CD8-positive, alpha-beta memory T cell (primary cell): ENCODE measurements at regions of chr1 and their contacts with region 1.

Region 1: GRCh38 chr1:203267347-203267846 is 37.9 kb upstream of the BTG2 start:
- DNase-seq: peak; percentile 68 to 88 (median 82)
- H3K4me3 ChIP-seq: peak overlapping the region; percentile 83
- H3K4me3 Mint-ChIP-seq: peak overlapping the region; percentile 82 to 93 (median 87)
- H3K27ac ChIP-seq: no peak overlapping the region
- H3K27ac Mint-ChIP-seq: peak overlapping the region; percentile 82 to 95 (median 92)
- H3K4me1 ChIP-seq: peaks cover 34% of the 10 kb centered on the region
- H3K4me1 Mint-ChIP-seq: peaks cover 11 to 22% (median 21%) of the 10 kb centered on the region in 3 donors
- H3K27me3 ChIP-seq: no peaks in the 10 kb centered on the region
- H3K27me3 Mint-ChIP-seq: peaks cover 2 to 3% of the 10 kb centered on the region in 2 donors

Region 2: GRCh38 chr1:203038891-203039608 is 228.3 kb before region 1 on chr1:
- CTCF ChIA-PET with region 1: interaction called, 21 read pairs
- POLR2A ChIA-PET with region 1: interaction called, 3 read pairs
- DNase-seq: peak; percentile 15 to 73 (median 45)
- H3K4me3 ChIP-seq: no peak overlapping the region
- H3K4me3 Mint-ChIP-seq: no peak overlapping the region
- H3K27ac ChIP-seq: no peak overlapping the region
- H3K27ac Mint-ChIP-seq: no peak overlapping the region
- H3K4me1 ChIP-seq: no peaks in the 10 kb centered on the region
- H3K4me1 Mint-ChIP-seq: peaks cover 1 to 5% (median 5%) of the 10 kb centered on the region in 3 donors
- H3K27me3 ChIP-seq: no peaks in the 10 kb centered on the region
- H3K27me3 Mint-ChIP-seq: peaks cover 4 to 12% of the 10 kb centered on the region in 2 donors

Region 3: DNA sequence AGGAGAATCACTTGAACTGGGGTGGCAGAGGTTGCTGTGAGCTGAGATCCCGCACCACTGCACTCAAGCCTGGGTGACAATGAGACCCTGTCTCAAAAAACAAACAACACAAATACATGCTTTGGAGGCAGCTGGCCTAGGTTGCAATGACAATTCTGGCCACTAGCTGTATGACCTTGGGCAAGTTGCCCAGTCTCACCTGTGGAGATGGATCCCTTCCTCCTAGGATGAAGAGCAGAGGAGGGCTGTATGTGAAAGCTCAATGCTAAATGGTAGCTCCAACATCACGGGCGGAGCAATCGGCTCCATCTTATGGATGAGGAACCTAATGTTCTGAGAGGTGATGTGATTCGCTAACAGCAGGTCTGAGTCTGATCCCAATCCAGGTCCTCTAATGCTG is 119.3 kb before region 1 on chr1:
- CTCF ChIA-PET with region 1: no interaction called
- POLR2A ChIA-PET with region 1: no interaction called
- DNase-seq: no peak
- H3K4me3 ChIP-seq: no peak overlapping the region
- H3K4me3 Mint-ChIP-seq: no peak overlapping the region
- H3K27ac ChIP-seq: no peak overlapping the region
- H3K27ac Mint-ChIP-seq: no peak overlapping the region
- H3K4me1 ChIP-seq: no peaks in the 10 kb centered on the region
- H3K4me1 Mint-ChIP-seq: no peaks in the 10 kb centered on the region
- H3K27me3 ChIP-seq: no peaks in the 10 kb centered on the region
- H3K27me3 Mint-ChIP-seq: peaks cover 7 to 11% of the 10 kb centered on the region in 2 donors

Region 4: GRCh38 chr1:203207751-203208150 is 59.6 kb before region 1 on chr1:
- CTCF ChIA-PET with region 1: no interaction called
- POLR2A ChIA-PET with region 1: no interaction called
- DNase-seq: no peak
- H3K4me3 ChIP-seq: no peak overlapping the region
- H3K4me3 Mint-ChIP-seq: no peak overlapping the region
- H3K27ac ChIP-seq: no peak overlapping the region
- H3K27ac Mint-ChIP-seq: no peak overlapping the region
- H3K4me1 ChIP-seq: no peaks in the 10 kb centered on the region
- H3K4me1 Mint-ChIP-seq: no peaks in the 10 kb centered on the region
- H3K27me3 ChIP-seq: no peaks in the 10 kb centered on the region
- H3K27me3 Mint-ChIP-seq: peaks cover under 1 to 14% of the 10 kb centered on the region in 2 donors

Region 5: DNA sequence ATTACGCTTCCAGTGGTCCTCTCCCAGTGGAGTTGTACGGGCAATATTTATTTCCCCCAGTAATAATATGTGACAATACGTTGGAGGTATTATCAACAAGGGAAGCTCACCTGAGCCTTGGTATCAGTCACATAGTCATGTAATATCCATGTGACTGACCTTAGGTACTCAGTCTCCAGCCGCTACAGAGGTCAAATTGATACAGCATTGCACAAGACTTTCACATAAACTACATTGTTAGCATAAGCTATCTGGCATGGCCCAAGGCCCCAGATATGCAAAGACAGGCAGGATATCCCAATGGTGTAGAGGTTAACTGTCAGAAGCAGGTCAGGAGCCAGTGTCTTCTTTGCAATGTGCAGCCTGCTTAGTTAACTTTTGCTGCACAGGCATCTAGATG is 22.6 kb before region 1 on chr1:
- CTCF ChIA-PET with region 1: no interaction called
- POLR2A ChIA-PET with region 1: no interaction called
- DNase-seq: no peak
- H3K4me3 ChIP-seq: no peak overlapping the region
- H3K4me3 Mint-ChIP-seq: no peak overlapping the region
- H3K27ac ChIP-seq: no peak overlapping the region
- H3K27ac Mint-ChIP-seq: no peak overlapping the region
- H3K4me1 ChIP-seq: no peaks in the 10 kb centered on the region
- H3K4me1 Mint-ChIP-seq: no peaks in the 10 kb centered on the region
- H3K27me3 ChIP-seq: no peaks in the 10 kb centered on the region
- H3K27me3 Mint-ChIP-seq: peaks cover 27 to 61% of the 10 kb centered on the region in 2 donors

Region 6: DNA sequence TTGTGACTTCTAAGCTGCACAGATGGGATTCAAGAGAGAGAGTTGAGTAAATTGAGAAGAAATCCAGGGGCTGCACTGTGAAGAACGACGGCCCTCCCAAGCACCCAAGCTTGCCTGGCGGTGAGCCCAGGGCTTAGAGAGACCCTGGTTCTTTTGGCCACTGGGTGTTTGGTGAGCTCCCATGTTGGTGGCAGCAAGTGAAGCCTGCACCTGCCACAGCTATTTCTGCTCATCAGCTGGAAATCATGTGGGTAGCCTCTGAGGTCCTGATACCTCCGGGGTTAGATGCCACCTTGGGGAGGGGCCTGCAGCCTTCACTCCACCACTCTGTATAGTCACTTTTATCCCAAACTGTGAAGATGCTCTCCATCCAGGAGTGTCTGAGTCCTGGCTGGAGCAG is 31.8 kb after region 1 on chr1:
- CTCF ChIA-PET with region 1: interaction called, 242 read pairs
- POLR2A ChIA-PET with region 1: no interaction called
- DNase-seq: no peak
- H3K4me3 ChIP-seq: no peak overlapping the region
- H3K4me3 Mint-ChIP-seq: no peak overlapping the region
- H3K27ac ChIP-seq: no peak overlapping the region
- H3K27ac Mint-ChIP-seq: no peak overlapping the region
- H3K4me1 ChIP-seq: peaks cover 14% of the 10 kb centered on the region
- H3K4me1 Mint-ChIP-seq: peaks cover 25 to 40% (median 25%) of the 10 kb centered on the region in 3 donors
- H3K27me3 ChIP-seq: no peaks in the 10 kb centered on the region
- H3K27me3 Mint-ChIP-seq: peaks cover 0 to 6% of the 10 kb centered on the region in 2 donors

Region 7: DNA sequence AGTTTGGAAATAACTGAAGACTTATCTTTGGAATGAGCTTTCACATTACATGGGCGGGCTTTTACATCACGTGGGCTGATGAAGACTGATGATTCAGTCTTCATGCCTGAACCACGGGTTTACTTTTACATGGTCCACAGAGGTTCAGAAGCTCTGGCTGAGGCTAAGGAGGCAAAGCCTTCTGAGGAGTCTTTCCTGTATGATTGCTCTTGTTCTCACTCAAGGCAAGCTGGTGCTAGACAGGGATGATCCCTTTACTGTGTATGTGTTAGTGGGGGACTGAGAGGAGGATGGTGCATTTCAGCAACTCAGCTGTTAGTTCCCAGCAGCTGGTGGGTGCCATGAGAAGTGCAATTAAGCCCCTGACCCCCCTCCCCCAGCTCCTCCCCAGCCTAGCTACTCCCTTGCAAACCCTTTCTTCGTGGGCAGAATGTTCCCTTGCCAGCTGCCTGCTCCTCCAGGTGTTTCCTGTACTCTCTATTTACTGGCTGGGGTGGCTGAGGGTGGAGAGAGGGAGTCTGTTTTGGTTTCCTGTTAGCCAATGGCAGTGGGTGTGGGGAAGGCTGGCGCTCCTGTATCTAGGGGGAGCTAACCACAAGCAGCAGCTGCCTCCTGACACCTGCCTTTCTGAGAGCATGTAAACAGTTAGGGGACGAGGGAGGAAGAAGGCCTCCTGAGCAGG is 53.3 kb after region 1 on chr1:
- CTCF ChIA-PET with region 1: interaction called, 126 read pairs
- POLR2A ChIA-PET with region 1: interaction called, 14 read pairs
- DNase-seq: peak; percentile 59 to 89 (median 85)
- H3K4me3 ChIP-seq: peak overlapping the region; percentile 34
- H3K4me3 Mint-ChIP-seq: peak overlapping the region; percentile 33 to 90 (median 80)
- H3K27ac ChIP-seq: peak overlapping the region; percentile 48
- H3K27ac Mint-ChIP-seq: peak overlapping the region; percentile 93 to 99 (median 98)
- H3K4me1 ChIP-seq: peaks cover 75% of the 10 kb centered on the region
- H3K4me1 Mint-ChIP-seq: peaks cover 79 to 92% (median 90%) of the 10 kb centered on the region in 3 donors
- H3K27me3 ChIP-seq: no peaks in the 10 kb centered on the region
- H3K27me3 Mint-ChIP-seq: peaks cover 0 to 3% of the 10 kb centered on the region in 2 donors

Region 8: GRCh38 chr1:203486618-203487370 is 219.4 kb after region 1 on chr1:
- CTCF ChIA-PET with region 1: interaction called, 228 read pairs
- POLR2A ChIA-PET with region 1: interaction called, 5 read pairs
- DNase-seq: no peak
- H3K4me3 ChIP-seq: no peak overlapping the region
- H3K4me3 Mint-ChIP-seq: peak overlapping the region in 6 of 7 donors; percentile 79 to 89 (median 83)
- H3K27ac ChIP-seq: no peak overlapping the region
- H3K27ac Mint-ChIP-seq: peak overlapping the region in 2 of 8 donors; percentile 70 to 91
- H3K4me1 ChIP-seq: peaks cover 9% of the 10 kb centered on the region
- H3K4me1 Mint-ChIP-seq: peaks cover 0 to 12% (median 8%) of the 10 kb centered on the region in 3 donors
- H3K27me3 ChIP-seq: no peaks in the 10 kb centered on the region
- H3K27me3 Mint-ChIP-seq: peaks cover 3 to 7% of the 10 kb centered on the region in 2 donors

Region 9: DNA sequence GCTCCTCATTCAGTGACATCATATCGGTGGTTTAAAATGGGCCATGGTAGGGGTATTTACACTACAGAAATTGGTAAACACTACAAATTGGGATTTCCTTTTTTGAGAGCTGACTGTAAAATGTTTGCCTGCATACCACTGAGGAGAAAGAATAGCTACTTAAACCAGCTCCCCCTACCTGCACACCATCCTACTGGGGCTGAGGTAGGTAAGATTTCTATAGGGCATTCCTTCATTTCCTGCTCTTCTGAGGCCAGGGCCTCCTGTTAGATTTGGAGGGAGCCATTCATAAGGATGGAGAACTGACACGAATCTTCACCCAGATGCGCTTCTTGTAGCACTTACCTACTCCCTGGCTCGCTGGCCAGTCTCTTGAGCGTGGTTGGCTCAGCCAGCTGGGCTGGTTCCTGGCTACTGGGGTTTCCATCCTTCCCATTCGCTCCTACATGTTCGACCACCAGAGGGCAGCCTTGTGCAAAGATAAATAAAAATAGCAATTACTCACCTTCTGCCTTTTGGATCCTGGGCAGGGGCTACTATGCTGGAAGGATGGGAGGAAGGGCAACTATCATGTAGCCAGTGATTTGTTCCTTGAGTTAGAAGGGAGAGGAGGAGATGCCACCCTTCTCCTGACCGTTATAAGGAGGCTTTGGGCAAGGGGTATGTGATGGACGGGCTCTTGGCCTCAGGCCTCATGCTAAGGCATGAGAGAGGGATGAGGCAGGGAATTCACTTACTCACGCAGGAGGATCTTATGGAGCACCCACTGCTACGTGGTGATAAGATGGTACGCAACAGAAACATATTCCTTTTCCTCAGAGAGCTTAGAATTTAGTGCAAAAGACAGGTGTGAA is 237.2 kb after region 1 on chr1:
- CTCF ChIA-PET with region 1: interaction called, 33 read pairs
- POLR2A ChIA-PET with region 1: no interaction called
- DNase-seq: peak; percentile 51 to 77 (median 58)
- H3K4me3 ChIP-seq: no peak overlapping the region
- H3K4me3 Mint-ChIP-seq: no peak overlapping the region
- H3K27ac ChIP-seq: no peak overlapping the region
- H3K27ac Mint-ChIP-seq: no peak overlapping the region
- H3K4me1 ChIP-seq: no peaks in the 10 kb centered on the region
- H3K4me1 Mint-ChIP-seq: peaks cover 1 to 6% (median 5%) of the 10 kb centered on the region in 3 donors
- H3K27me3 ChIP-seq: no peaks in the 10 kb centered on the region
- H3K27me3 Mint-ChIP-seq: peaks cover 3 to 4% of the 10 kb centered on the region in 2 donors

Region 10: DNA sequence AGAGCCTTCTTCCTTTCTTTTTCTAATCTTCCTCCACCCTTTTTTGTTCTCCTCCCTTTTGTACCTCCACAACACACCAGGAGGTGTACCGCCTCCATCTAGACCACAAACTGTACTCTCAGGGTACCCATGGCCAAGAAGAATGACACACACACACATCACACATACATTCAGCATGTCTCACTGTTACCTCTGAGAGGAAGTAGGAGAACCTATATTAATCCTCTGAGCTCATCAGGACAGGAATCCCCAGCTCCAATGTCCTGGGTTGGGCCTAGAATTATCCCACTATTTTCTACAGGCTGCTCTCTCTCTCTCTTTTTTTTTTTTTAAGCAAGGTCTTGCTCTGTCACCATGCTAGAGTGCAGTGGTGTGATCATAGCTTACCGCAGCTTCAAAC is 395.9 kb after region 1 on chr1:
- CTCF ChIA-PET with region 1: no interaction called
- POLR2A ChIA-PET with region 1: no interaction called
- DNase-seq: no peak
- H3K4me3 ChIP-seq: no peak overlapping the region
- H3K4me3 Mint-ChIP-seq: peak overlapping the region in 5 of 7 donors; percentile 19 to 38 (median 21)
- H3K27ac ChIP-seq: no peak overlapping the region
- H3K27ac Mint-ChIP-seq: peak overlapping the region; percentile 6 to 93 (median 84)
- H3K4me1 ChIP-seq: peaks cover 40% of the 10 kb centered on the region
- H3K4me1 Mint-ChIP-seq: peaks cover 70 to 77% (median 74%) of the 10 kb centered on the region in 3 donors
- H3K27me3 ChIP-seq: no peaks in the 10 kb centered on the region
- H3K27me3 Mint-ChIP-seq: no peaks in the 10 kb centered on the region